ENCODE measurements at regions of chr4 and their contacts with region 1.

Region 1: GRCh38 chr4:16205298-16206164 is 20.7 kb downstream of the TAPT1 start:
- DNase-seq: no peak
- ATAC-seq: peak; percentile 94
- H3K4me3 ChIP-seq: no peak overlapping the region
- H3K27ac ChIP-seq: no peak overlapping the region
- H3K4me1 ChIP-seq: peaks cover 6% of the 10 kb centered on the region
- H3K27me3 ChIP-seq: no peaks in the 10 kb centered on the region
- CTCF ChIP-seq: peak; percentile 61 to 79 (median 75)
- EP300 ChIP-seq: no peak
- POLR2A ChIP-seq: no peak
- RAD21 ChIP-seq: peak; percentile 23; the same call in 1 of the 2 replicates

Region 2: DNA sequence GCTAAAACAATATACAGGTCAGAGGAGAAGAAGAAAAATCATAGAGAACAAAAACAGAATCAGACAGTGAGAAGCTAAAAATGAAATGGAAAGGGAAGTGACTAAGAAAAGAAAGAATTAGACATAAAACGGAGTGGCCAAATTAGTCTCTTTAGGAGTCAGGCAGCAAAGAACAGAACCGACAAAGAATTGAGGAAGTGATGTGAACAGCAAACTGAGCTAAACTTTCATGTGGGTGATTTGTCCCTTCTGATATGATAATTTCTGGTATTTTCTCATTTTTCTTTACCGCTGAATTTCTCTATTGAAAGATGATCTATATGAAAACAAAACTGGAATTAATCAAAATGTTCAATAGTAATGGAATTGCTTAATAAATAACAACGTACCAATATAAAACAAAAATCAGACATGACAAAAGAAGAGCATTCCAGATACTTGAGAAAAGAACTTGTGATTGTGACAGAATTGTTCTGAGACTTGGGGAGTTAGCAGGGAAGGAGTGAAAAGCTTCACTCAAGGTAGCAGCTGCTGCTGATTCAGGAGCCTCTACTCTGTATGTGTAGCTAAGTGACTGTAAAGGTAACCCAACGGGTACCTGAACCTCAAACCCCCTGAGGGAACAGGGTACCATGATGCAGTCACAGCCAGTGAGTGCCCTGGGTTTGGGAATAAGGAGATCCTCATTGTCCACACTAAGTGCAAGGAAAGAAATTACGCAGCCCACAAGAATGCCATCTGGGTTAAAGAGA is 11.9 kb after region 1 on chr4:
- CTCF ChIA-PET with region 1: interaction called, 33 read pairs
- POLR2A ChIA-PET with region 1: no interaction called
- RAD21 ChIA-PET with region 1: interaction called, 4 read pairs
- SMC1A ChIA-PET with region 1: interaction called, 13 read pairs
- in situ Hi-C with region 1: no loop called
- intact Hi-C with region 1: no loop called
- DNase-seq: no peak
- ATAC-seq: peak; percentile 89
- H3K4me3 ChIP-seq: no peak overlapping the region
- H3K27ac ChIP-seq: peak overlapping the region; percentile 58
- H3K4me1 ChIP-seq: peaks cover 11% of the 10 kb centered on the region
- H3K27me3 ChIP-seq: no peaks in the 10 kb centered on the region
- CTCF ChIP-seq: no peak
- EP300 ChIP-seq: no peak
- POLR2A ChIP-seq: no peak
- RAD21 ChIP-seq: no peak

Region 3: GRCh38 chr4:16225863-16226815 is 20.6 kb after region 1 on chr4 and contains the start of gene TAPT1:
- CTCF ChIA-PET with region 1: interaction called, 19 read pairs
- POLR2A ChIA-PET with region 1: interaction called, 4 read pairs
- RAD21 ChIA-PET with region 1: interaction called, 4 read pairs
- SMC1A ChIA-PET with region 1: interaction called, 5 read pairs
- in situ Hi-C with region 1: no loop called
- intact Hi-C with region 1: no loop called
- DNase-seq: no peak
- ATAC-seq: peak; percentile 67
- H3K4me3 ChIP-seq: peak within 1 kb of the TSS; percentile 85
- H3K27ac ChIP-seq: peak within 1 kb of the TSS; percentile 76
- H3K4me1 ChIP-seq: peaks cover 4% of the 10 kb centered on the region
- H3K27me3 ChIP-seq: no peaks in the 10 kb centered on the region
- CTCF ChIP-seq: no peak
- EP300 ChIP-seq: no peak
- POLR2A ChIP-seq: peak; percentile 80
- RAD21 ChIP-seq: no peak
- polyA plus RNA-seq, gene TAPT1: 1.2 to 2.3 TPM

Region 4: DNA sequence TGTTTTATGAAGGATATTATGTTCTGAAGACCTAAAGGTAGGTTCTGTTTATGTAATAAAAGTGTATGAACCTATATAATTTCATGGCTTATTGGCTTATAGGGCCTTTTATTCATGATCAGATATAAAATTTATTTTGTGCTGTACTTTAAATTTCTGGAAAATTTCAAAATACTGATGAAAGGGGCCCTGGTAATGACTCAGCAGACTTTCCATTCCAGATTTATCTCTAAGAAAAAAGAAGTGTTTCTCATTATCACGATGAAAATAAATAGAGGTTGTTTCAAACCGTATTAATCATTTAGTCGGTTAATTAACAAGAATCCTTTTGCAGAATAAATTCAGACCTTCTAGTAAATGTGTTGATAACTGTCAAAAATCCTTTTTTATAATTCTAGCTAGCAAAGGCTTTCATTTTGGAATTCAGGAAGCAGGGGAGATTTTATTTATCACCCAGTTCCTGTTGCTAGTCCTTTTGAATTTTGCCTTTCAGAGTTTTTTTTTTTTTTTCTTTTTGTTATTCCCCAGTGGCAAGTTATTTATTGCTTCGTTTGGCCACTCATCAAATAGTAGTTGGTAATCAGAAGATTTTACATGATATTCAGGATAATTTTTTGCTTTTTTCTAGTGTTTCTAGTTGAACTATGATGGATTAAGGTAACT is 26.2 kb after region 1 on chr4:
- CTCF ChIA-PET with region 1: interaction called, 19 read pairs
- POLR2A ChIA-PET with region 1: no interaction called
- RAD21 ChIA-PET with region 1: no interaction called
- SMC1A ChIA-PET with region 1: interaction called, 3 read pairs
- in situ Hi-C with region 1: no loop called
- intact Hi-C with region 1: no loop called
- DNase-seq: no peak
- ATAC-seq: no peak
- H3K4me3 ChIP-seq: no peak overlapping the region
- H3K27ac ChIP-seq: no peak overlapping the region
- H3K4me1 ChIP-seq: no peaks in the 10 kb centered on the region
- H3K27me3 ChIP-seq: no peaks in the 10 kb centered on the region
- CTCF ChIP-seq: no peak
- EP300 ChIP-seq: no peak
- POLR2A ChIP-seq: no peak
- RAD21 ChIP-seq: no peak

Region 5: GRCh38 chr4:16284050-16284449 is 78.5 kb after region 1 on chr4:
- CTCF ChIA-PET with region 1: no interaction called
- POLR2A ChIA-PET with region 1: no interaction called
- RAD21 ChIA-PET with region 1: no interaction called
- SMC1A ChIA-PET with region 1: no interaction called
- in situ Hi-C with region 1: no loop called
- intact Hi-C with region 1: no loop called
- DNase-seq: no peak
- ATAC-seq: no peak
- H3K4me3 ChIP-seq: no peak overlapping the region
- H3K27ac ChIP-seq: no peak overlapping the region
- H3K4me1 ChIP-seq: no peaks in the 10 kb centered on the region
- H3K27me3 ChIP-seq: no peaks in the 10 kb centered on the region; a peak in 1 of 4 replicates
- CTCF ChIP-seq: no peak
- EP300 ChIP-seq: no peak
- POLR2A ChIP-seq: no peak
- RAD21 ChIP-seq: no peak